GM12878 (cell line): ENCODE measurements at regions of chr5 and their contacts with region 1.

Region 1: DNA sequence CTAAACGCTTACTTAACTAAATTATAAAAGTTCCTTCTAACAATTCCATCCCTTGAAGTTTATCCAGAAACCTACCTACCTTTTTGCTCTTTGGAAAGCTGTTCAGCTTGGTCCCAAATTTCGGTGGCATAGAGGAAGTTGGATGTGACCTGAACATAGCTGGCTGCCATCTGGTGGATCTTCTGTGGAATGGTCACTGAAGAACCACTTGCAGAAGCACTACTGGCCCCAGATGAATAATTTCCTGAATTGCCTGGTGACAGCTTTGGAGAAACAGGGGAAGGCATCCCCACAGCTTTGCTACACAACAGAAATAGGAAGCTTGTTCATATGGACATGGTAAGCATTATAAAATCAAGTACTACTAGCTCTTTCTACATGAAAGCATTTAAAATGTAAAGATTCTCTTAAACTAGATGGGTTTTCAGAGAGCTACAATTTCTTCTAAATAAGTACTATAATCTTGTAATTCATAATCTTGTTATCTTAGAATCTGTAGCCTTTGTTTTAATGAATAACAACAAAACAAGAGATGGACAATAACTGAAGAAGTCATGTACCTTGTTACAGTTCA is 9.9 kb downstream of the LEAP2 start:
- DNase-seq: no peak
- ATAC-seq: peak; percentile 96
- H3K4me3 ChIP-seq: no peak overlapping the region
- H3K27ac ChIP-seq: no peak overlapping the region
- H3K4me1 ChIP-seq: no peaks in the 10 kb centered on the region
- H3K27me3 ChIP-seq: no peaks in the 10 kb centered on the region
- CTCF ChIP-seq: peak; percentile 61 to 78 (median 67)
- EP300 ChIP-seq: no peak
- POLR2A ChIP-seq: no peak
- RAD21 ChIP-seq: peak; percentile 64

Region 2: GRCh38 chr5:132506094-132506692 is 377.2 kb before region 1 on chr5:
- CTCF ChIA-PET with region 1: interaction called, 14 read pairs
- POLR2A ChIA-PET with region 1: no interaction called
- RAD21 ChIA-PET with region 1: interaction called, 7 read pairs
- SMC1A ChIA-PET with region 1: interaction called, 9 read pairs
- in situ Hi-C with region 1: no loop called
- intact Hi-C with region 1: loop called (anchors 1 kb)
- DNase-seq: no peak
- ATAC-seq: peak; percentile 89
- H3K4me3 ChIP-seq: no peak overlapping the region
- H3K27ac ChIP-seq: no peak overlapping the region
- H3K4me1 ChIP-seq: peaks cover 14% of the 10 kb centered on the region
- H3K27me3 ChIP-seq: no peaks in the 10 kb centered on the region
- CTCF ChIP-seq: peak; percentile 69 to 77 (median 74)
- EP300 ChIP-seq: no peak
- POLR2A ChIP-seq: no peak
- RAD21 ChIP-seq: peak; percentile 81

Region 3: DNA sequence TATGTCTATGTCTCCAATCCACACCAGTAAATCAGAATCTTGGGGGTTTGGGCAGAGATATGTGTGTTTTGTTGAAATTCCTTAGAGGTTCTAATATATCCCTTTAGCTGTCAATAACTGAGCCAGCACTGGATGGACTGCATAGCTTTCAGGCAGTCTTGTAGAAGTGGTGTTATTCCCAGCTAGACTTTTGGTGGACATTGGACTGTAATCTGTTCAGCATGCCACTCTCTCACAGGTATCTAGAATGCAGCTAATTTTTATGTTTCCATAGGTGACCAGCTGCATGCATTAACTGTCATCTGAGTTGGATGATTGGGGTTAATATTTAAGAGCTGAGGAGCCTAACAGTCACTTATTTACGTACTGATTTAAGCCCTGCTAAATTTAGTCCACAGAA is 270.5 kb before region 1 on chr5:
- CTCF ChIA-PET with region 1: no interaction called
- POLR2A ChIA-PET with region 1: no interaction called
- RAD21 ChIA-PET with region 1: no interaction called
- SMC1A ChIA-PET with region 1: no interaction called
- in situ Hi-C with region 1: no loop called
- intact Hi-C with region 1: loop called (anchors 10 kb)
- DNase-seq: no peak
- ATAC-seq: no peak
- H3K4me3 ChIP-seq: no peak overlapping the region
- H3K27ac ChIP-seq: no peak overlapping the region
- H3K4me1 ChIP-seq: no peaks in the 10 kb centered on the region
- H3K27me3 ChIP-seq: no peaks in the 10 kb centered on the region
- CTCF ChIP-seq: no peak
- EP300 ChIP-seq: no peak
- POLR2A ChIP-seq: no peak
- RAD21 ChIP-seq: no peak

Region 4: GRCh38 chr5:132829742-132830435 is 53.5 kb before region 1 on chr5:
- CTCF ChIA-PET with region 1: interaction called, 28 read pairs
- POLR2A ChIA-PET with region 1: no interaction called
- RAD21 ChIA-PET with region 1: interaction called, 5 read pairs
- SMC1A ChIA-PET with region 1: interaction called, 16 read pairs
- in situ Hi-C with region 1: no loop called
- intact Hi-C with region 1: loop called (anchors 1 kb)
- DNase-seq: no peak
- ATAC-seq: peak; percentile 90
- H3K4me3 ChIP-seq: peak overlapping the region; percentile 59
- H3K27ac ChIP-seq: peak overlapping the region; percentile 18; the same call in 1 of the 2 replicates
- H3K4me1 ChIP-seq: no peaks in the 10 kb centered on the region; the same call in 1 of the 2 replicates
- H3K27me3 ChIP-seq: peaks cover 0 to 2% of the 10 kb centered on the region in 2 experiments; a peak in 2 of 4 replicates
- CTCF ChIP-seq: peak; percentile 84 to 94 (median 89)
- EP300 ChIP-seq: 0 out of 4 replicates have a peak, but pooled peaks of 1 of the 2 experiments have one; percentile 9
- POLR2A ChIP-seq: peak; percentile 67
- RAD21 ChIP-seq: peak; percentile 73

Region 5: DNA sequence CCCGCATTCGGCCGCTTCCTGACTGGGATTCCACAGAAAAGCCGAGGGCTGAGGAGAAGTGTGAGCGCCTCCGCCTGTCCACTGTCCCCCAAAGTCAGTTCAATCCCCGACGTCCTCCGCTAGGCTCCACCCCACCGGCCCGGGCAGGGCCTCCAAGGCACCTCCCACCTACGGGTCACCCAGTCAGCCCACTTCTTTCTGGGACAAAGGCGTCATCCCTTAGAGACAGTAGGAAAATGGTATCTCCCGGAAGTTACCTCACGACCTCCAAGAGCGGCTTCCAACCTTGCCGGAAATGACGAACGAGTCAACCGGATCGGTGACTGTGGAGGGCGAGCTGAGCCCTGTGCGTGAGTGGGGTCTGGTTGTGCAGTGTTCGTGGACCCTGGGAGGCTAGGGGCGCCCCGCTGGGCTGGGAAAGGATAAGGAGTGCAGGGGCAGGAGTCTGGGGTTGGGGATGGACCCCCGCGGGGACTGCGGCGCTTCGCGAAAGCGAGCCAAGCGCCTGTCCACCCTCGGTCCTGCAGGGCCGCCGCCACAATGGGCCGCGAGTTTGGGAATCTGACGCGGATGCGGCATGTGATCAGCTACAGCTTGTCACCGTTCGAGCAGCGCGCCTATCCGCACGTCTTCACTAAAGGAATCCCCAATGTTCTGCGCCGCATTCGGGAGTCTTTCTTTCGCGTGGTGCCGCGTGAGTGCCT is 16.9 kb before region 1 on chr5 and contains the starts of genes GDF9 and UQCRQ:
- CTCF ChIA-PET with region 1: interaction called, 11 read pairs
- POLR2A ChIA-PET with region 1: interaction called, 3 read pairs
- RAD21 ChIA-PET with region 1: interaction called, 6 read pairs
- SMC1A ChIA-PET with region 1: interaction called, 5 read pairs
- in situ Hi-C with region 1: no loop called
- intact Hi-C with region 1: no loop called
- DNase-seq: peak; percentile 98
- ATAC-seq: peak; percentile 99
- H3K4me3 ChIP-seq: peak within 1 kb of the TSS; percentile 85
- H3K27ac ChIP-seq: peak within 1 kb of the TSS; percentile 78
- H3K4me1 ChIP-seq: peaks cover 3% of the 10 kb centered on the region
- H3K27me3 ChIP-seq: no peaks in the 10 kb centered on the region
- CTCF ChIP-seq: peak; percentile 10 to 48 (median 18); a peak in 3 of 6 replicates
- EP300 ChIP-seq: no peak
- POLR2A ChIP-seq: peak; percentile 99
- RAD21 ChIP-seq: no peak
- polyA plus RNA-seq, gene GDF9: 0.11 to 0.24 TPM
- polyA plus RNA-seq, gene UQCRQ: 1,403 to 1,579 TPM

Region 6: DNA sequence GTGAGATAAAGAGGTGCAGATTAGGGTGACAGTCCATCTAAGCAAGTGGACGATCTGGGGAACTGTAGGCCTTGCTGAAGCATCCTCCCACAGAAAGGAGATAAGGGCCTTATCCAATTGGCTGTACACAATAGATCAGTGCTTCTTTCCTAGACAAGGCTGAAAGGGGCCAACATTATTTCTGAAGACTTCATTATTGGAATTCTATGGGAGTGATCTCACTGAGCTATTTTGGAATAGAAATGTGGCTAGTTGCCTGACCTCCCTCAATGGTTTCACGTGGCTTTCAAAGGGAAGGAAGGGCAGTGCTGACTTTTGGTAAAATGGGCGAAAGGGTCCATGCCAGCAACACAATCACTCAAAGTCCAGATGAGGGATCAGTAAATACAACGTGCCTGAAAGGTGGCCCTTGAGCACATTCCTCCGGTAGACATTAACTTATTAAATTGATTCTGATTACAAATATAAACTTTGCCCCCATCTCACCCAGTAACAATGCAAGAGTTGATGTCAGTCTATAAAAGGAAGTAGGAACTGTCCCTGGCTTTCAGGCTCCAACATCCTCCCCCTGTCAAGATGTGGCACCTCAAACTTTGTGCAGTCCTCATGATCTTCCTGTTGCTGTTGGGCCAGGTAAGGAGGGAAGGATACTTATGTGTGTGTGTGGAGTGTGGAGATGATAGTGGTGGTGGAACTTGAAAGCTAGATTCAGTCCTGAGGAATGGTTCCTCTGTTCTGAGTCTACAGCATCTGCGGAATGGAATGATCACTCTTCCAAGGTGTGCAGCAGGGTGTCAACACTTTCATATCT is 10.0 kb before region 1 on chr5 and contains the start of gene LEAP2:
- CTCF ChIA-PET with region 1: interaction called, 8 read pairs
- POLR2A ChIA-PET with region 1: interaction called, 12 read pairs
- RAD21 ChIA-PET with region 1: interaction called, 3 read pairs
- SMC1A ChIA-PET with region 1: interaction called, 10 read pairs
- in situ Hi-C with region 1: no loop called
- intact Hi-C with region 1: no loop called
- DNase-seq: no peak
- ATAC-seq: no peak
- H3K4me3 ChIP-seq: no peak within 1 kb of the TSS
- H3K27ac ChIP-seq: no peak within 1 kb of the TSS
- H3K4me1 ChIP-seq: no peaks in the 10 kb centered on the region
- H3K27me3 ChIP-seq: no peaks in the 10 kb centered on the region
- CTCF ChIP-seq: no peak
- EP300 ChIP-seq: no peak
- POLR2A ChIP-seq: no peak
- RAD21 ChIP-seq: no peak
- polyA plus RNA-seq, gene LEAP2: 1.9 to 2.1 TPM

Region 7: DNA sequence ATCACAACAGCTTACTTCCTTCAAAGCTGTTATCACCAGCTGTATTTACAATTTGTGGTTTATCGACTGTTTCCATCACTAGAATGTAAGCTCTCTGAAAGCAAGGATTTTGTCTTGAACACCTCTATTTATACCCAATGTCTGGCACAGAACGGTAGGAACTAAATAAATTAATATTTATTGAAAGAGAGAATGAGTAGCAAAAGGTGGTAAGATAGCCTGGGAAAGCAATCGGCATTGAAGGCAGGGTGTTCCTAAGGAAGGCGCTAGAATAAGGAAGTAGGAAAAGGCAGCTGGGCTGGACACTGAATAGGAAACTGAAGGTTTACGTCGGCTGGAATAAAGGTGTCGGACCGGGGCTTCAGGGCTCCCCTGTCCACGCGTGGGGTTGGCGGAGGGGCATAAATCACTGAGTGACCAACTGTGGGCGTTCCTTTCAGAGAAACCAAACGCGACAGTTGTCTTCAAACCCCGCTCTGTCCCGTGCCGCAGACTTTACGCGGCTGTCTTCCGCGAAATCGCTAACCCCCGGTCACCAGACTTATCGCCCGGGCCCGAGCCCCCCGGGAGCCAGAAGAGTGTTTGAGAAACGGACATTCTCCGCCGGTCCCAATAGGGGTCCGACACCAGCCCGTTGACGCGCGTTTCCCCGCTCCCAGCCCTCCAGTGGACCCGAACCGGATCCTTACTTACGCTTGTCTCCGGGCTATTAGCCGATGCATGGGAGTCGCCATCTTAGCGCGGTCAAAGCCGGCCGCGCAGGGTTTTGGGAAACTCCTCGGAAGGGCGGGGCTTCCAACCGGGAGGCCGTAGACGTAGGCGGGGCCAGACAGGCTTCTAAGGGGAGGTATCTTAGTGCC is 142.7 kb after region 1 on chr5 and contains the start of gene ZCCHC10:
- CTCF ChIA-PET with region 1: no interaction called
- POLR2A ChIA-PET with region 1: no interaction called
- RAD21 ChIA-PET with region 1: no interaction called
- SMC1A ChIA-PET with region 1: no interaction called
- in situ Hi-C with region 1: no loop called
- intact Hi-C with region 1: no loop called
- DNase-seq: peak; percentile 56
- ATAC-seq: peak; percentile 98
- H3K4me3 ChIP-seq: peak within 1 kb of the TSS; percentile 99
- H3K27ac ChIP-seq: peak within 1 kb of the TSS; percentile 73
- H3K4me1 ChIP-seq: 0 out of 2 replicates have a peak, but pooled peaks cover 5% of the 10 kb centered on the region
- H3K27me3 ChIP-seq: no peaks in the 10 kb centered on the region
- CTCF ChIP-seq: no peak
- EP300 ChIP-seq: no peak
- POLR2A ChIP-seq: peak; percentile 93
- RAD21 ChIP-seq: no peak
- polyA plus RNA-seq, gene ZCCHC10: 114 to 117 TPM